ENCODE measurements at regions of chr1 and their contacts with region 1.

Region 1: DNA sequence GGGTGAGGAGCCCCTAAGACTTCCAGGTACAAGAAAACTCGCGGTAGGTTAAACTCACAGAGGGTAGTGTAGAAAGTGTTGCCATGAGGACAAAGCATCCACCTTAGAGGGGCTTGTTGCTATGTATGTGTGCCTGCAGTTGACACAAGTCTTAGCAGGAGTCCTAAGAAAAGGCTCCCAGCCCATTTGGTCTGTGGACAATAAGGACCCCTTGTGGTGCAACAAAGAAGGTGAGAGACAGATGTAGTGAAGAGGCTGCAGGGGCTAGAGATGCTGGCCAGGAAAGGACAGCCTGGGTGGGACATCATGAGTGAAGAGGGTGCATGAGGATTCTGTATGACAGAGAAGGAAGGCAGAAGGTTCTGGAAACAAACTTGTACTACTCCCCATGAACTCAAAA is 36.3 kb upstream of the IL10 start:
- DNase-seq: peak; percentile 47
- H3K4me3 Mint-ChIP-seq: no peak overlapping the region
- H3K27ac Mint-ChIP-seq: no peak overlapping the region
- H3K4me1 Mint-ChIP-seq: peaks cover 48% of the 10 kb centered on the region
- H3K27me3 Mint-ChIP-seq: peaks cover 3% of the 10 kb centered on the region

Region 2: GRCh38 chr1:206725109-206725963 is 83.3 kb before region 1 on chr1:
- intact Hi-C with region 1: loop called (anchors 1 kb)
- DNase-seq: peak; percentile 45
- H3K4me3 Mint-ChIP-seq: no peak overlapping the region
- H3K27ac Mint-ChIP-seq: no peak overlapping the region
- H3K4me1 Mint-ChIP-seq: peaks cover 52% of the 10 kb centered on the region
- H3K27me3 Mint-ChIP-seq: no peaks in the 10 kb centered on the region

Region 3: DNA sequence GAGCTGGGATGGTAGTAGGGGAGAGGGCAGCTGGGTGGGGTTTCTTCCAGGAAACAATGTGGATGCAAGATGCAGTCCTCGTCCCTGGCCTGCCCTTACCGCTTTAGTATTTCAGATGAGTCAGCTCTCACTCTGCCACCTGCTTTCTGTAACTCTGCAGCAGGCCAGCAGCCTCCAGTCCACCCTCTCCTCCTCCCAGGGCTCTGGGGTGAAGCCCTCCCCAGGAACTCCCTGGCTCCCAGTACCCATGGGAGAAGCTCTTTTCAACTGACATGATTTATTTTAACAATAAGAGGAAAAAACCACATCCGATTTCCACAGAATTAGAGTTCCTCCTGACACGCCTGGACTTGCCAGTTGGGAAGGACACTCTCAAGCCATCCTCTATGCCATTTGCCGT is 17.8 kb after region 1 on chr1:
- intact Hi-C with region 1: no loop called
- DNase-seq: no peak
- H3K4me3 Mint-ChIP-seq: no peak overlapping the region
- H3K27ac Mint-ChIP-seq: no peak overlapping the region
- H3K4me1 Mint-ChIP-seq: peaks cover 39% of the 10 kb centered on the region
- H3K27me3 Mint-ChIP-seq: peaks cover 2% of the 10 kb centered on the region

Measured in activated T-helper 2 cell treated with anti-CD3 and anti-CD28 coated beads, Interferon-gamma antibody, Interleukin-2, Interleukin-4, amounts not matched to agents 10 μg/mL and 5 μg/mL and 100 μg/mL, durations not matched to agents 14 hours and 24 hours and 36 hours (primary cell).